ENCODE measurements at regions of chr10 and their contacts with region 1.

Region 1: GRCh38 chr10:3467052-3467951 is 294.7 kb upstream of the PITRM1 start:
- DNase-seq: peak; percentile 86
- ATAC-seq: peak; percentile 45
- H3K4me3 ChIP-seq: peak overlapping the region; percentile 59
- H3K27ac ChIP-seq: peak overlapping the region; percentile 100
- H3K4me1 ChIP-seq: peaks cover 55% of the 10 kb centered on the region
- H3K27me3 ChIP-seq: no peaks in the 10 kb centered on the region
- CTCF ChIP-seq: peak; percentile 77

Region 2: DNA sequence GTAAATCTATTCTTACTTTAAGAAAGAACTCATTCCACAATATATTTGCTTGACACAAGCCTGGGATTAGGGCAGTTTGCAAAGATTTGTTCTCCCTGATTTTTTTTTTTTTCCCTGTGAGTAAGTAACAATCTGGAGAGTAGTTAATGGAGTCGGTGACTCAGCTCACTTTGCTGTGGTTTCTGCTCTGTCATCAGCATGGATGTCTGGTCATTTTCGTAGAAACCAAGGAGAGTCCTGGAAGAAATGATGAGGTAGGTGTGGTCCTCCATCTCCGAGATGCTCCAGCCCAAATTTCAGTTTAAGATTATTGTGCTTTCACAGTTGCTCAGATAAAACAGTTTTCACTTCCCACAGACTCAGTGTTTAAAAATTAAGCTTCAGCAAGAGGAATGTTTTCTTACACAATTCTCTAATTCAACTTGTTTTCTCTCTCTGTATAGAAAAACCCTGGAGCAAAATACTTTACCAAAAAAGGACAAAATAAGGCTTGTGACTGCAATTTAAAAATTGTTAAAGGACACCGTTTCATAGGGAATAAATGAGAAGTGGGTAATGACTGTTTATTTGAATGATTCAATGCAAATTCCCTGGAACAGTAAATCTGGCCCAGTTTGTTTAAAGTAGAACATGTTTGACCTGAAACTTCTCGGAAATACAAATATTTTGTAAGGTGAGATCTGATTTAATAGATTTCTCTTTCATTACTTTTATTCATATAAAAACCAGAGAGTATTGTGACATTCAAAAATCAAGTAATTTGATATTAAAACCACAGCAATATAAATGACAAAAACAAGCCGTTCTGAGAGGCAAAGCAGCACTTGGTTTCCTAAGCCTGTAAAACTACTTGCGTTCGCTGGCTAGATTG is 218.2 kb before region 1 on chr10:
- CTCF ChIA-PET with region 1: no interaction called
- POLR2A ChIA-PET with region 1: no interaction called
- intact Hi-C with region 1: loop called (anchors 2 kb)
- DNase-seq: peak; percentile 68
- ATAC-seq: peak; percentile 95
- H3K4me3 ChIP-seq: peak overlapping the region; percentile 52; the same call in 1 of the 2 replicates
- H3K27ac ChIP-seq: peak overlapping the region; percentile 96
- H3K4me1 ChIP-seq: peaks cover 18% of the 10 kb centered on the region
- H3K27me3 ChIP-seq: no peaks in the 10 kb centered on the region
- CTCF ChIP-seq: no peak

Region 3: DNA sequence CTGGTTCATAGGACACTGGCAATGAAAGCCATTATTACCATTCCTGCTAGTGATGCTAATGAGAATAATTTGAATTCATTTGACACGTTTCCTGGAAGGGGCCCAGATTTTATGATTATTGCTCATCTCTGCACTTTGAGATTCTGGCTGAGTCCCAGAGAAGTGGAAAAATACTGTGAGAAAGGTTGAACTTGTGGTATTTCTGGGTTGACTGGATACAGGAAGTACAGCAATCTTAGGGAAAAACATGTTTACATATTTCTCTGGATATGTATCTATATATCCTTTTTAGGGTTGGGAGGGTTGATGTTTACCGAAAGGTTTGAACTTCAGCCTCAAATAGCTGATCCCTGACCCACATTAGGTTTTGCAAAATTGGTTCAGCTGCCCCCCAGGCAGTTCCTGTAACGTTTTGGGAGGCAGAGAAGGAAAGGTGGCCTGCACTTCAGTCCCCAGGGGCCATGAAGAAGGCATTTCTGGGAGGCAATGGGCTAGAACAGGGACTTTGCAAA is 41.1 kb before region 1 on chr10:
- CTCF ChIA-PET with region 1: no interaction called
- POLR2A ChIA-PET with region 1: no interaction called
- intact Hi-C with region 1: loop called (anchors 2 kb)
- DNase-seq: peak; percentile 75
- ATAC-seq: peak; percentile 62
- H3K4me3 ChIP-seq: no peak overlapping the region
- H3K27ac ChIP-seq: peak overlapping the region; percentile 83
- H3K4me1 ChIP-seq: peaks cover 40% of the 10 kb centered on the region
- H3K27me3 ChIP-seq: no peaks in the 10 kb centered on the region
- CTCF ChIP-seq: no peak

Region 4: DNA sequence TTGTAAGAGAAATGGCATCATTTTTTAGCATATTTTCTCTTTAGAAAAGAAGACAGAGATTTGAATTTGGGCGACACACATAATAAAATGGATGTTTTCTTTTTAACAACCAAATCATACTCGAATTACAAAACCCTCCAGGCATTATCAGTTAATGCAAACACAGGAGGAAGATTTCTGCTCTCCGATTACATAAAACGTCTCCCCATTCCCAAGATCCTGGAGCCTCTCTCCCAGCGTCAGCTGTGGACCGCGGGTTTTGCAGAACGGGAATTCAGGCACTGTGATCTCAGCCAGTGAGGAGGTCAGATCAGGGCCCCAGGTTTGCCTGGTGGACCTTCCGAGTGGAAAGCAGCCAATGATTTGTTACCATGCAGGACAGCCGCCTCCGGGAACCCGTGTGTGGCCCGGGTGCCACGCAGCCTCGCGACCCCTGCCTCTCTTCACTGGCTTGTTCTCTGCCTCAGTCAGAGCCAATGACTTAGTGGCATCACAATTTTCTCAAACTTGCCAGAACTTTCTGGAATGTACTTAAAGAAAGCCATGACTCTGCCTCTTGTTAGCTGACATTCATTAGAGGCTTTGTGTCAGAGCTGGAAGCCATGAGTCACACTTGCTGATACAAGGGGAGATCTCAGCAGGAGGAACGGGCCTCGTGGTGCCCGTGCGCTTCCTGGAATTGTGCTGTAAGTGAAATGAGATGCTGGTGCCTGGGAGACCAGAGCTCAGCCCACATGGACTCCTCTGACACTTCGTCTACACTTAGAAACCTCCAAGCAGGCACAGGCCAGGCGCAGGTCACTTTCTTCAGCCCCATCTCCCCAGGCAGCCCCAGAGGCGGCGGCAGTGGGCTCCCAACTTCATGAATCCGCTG is 71.6 kb after region 1 on chr10:
- CTCF ChIA-PET with region 1: interaction called, 4 read pairs
- POLR2A ChIA-PET with region 1: no interaction called
- intact Hi-C with region 1: loop called (anchors 1 kb)
- DNase-seq: peak; percentile 64
- ATAC-seq: peak; percentile 68
- H3K4me3 ChIP-seq: peak overlapping the region; percentile 39; the same call in 1 of the 2 replicates
- H3K27ac ChIP-seq: peak overlapping the region; percentile 89
- H3K4me1 ChIP-seq: peaks cover 45% of the 10 kb centered on the region
- H3K27me3 ChIP-seq: no peaks in the 10 kb centered on the region
- CTCF ChIP-seq: no peak

Region 5: GRCh38 chr10:3761021-3761686 is 293.9 kb after region 1 on chr10:
- CTCF ChIA-PET with region 1: interaction called, 3 read pairs
- POLR2A ChIA-PET with region 1: interaction called, 3 read pairs
- intact Hi-C with region 1: loop called (anchors 5 kb)
- DNase-seq: peak; percentile 36
- ATAC-seq: no peak
- H3K4me3 ChIP-seq: no peak overlapping the region
- H3K27ac ChIP-seq: peak overlapping the region; percentile 100
- H3K4me1 ChIP-seq: peaks cover 77% of the 10 kb centered on the region
- H3K27me3 ChIP-seq: no peaks in the 10 kb centered on the region
- CTCF ChIP-seq: no peak

Region 6: GRCh38 chr10:3895045-3895631 is 427.8 kb after region 1 on chr10:
- CTCF ChIA-PET with region 1: no interaction called
- POLR2A ChIA-PET with region 1: no interaction called
- intact Hi-C with region 1: loop called (anchors 5 kb)
- DNase-seq: peak; percentile 49
- ATAC-seq: peak; percentile 76
- H3K4me3 ChIP-seq: no peak overlapping the region
- H3K27ac ChIP-seq: peak overlapping the region; percentile 85
- H3K4me1 ChIP-seq: peaks cover 38% of the 10 kb centered on the region
- H3K27me3 ChIP-seq: no peaks in the 10 kb centered on the region
- CTCF ChIP-seq: no peak

Region 7: DNA sequence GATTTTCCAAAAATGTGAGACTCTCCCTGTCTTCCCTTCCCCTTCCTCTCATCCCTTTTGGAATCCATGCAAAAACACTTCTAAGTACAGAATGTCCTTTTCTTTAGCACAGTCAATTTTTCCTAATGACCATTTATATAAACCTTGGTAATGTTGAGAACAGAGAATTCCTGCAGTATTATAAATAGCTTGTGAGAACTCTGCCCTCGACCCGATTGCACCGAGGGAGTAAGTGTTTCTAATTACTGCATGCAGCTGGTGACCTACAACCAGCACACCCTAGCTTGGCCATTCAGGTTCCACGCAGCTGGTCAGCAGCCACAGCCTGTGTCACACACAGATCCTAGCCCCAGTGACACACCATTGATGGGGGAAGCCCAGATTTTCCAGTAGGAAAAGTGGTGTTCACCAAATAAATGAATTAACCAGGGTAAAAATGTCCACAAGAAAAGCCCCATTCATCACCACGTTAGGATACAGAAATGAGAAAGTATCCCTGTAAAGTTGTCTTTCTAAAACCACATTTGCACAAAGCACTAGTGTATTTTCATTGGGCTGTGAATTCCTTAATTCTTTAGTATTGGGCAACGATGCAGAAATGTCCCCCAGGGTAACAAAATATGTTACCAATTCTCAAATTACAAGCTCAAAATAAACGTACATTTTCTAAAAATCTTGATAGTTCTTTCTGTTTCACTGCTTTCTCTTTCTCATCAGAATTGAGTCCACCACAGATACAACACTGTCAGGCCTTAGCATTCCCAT is 816.7 kb after region 1 on chr10:
- CTCF ChIA-PET with region 1: no interaction called
- POLR2A ChIA-PET with region 1: no interaction called
- intact Hi-C with region 1: loop called (anchors 10 kb)
- DNase-seq: no peak
- ATAC-seq: no peak
- H3K4me3 ChIP-seq: no peak overlapping the region
- H3K27ac ChIP-seq: no peak overlapping the region
- H3K4me1 ChIP-seq: peaks cover 29% of the 10 kb centered on the region
- H3K27me3 ChIP-seq: no peaks in the 10 kb centered on the region
- CTCF ChIP-seq: no peak

Measured in PC-3 (cell line).